ENCODE measurements at regions of chr11 and their contacts with region 1.

Region 1: GRCh38 chr11:17528181-17528691 is 16.0 kb downstream of the USH1C start:
- DNase-seq: peak; percentile 82
- ATAC-seq: peak; percentile 95
- H3K4me3 Mint-ChIP-seq: no peak overlapping the region
- H3K27ac Mint-ChIP-seq: no peak overlapping the region
- H3K4me1 Mint-ChIP-seq: peaks cover 5% of the 10 kb centered on the region; the same call in 1 of the 2 replicates
- H3K27me3 Mint-ChIP-seq: no peaks in the 10 kb centered on the region; the same call in 1 of the 2 replicates
- CTCF ChIP-seq: peak; percentile 73

Region 2: GRCh38 chr11:17229481-17230152 is 298.6 kb before region 1 on chr11:
- CTCF ChIA-PET with region 1: interaction called, 19 read pairs
- POLR2A ChIA-PET with region 1: no interaction called
- DNase-seq: no peak
- ATAC-seq: no peak
- H3K4me3 Mint-ChIP-seq: no peak overlapping the region
- H3K27ac Mint-ChIP-seq: no peak overlapping the region
- H3K4me1 Mint-ChIP-seq: no peaks in the 10 kb centered on the region
- H3K27me3 Mint-ChIP-seq: no peaks in the 10 kb centered on the region
- CTCF ChIP-seq: no peak

Region 3: GRCh38 chr11:17384002-17384511 is 144.2 kb before region 1 on chr11:
- CTCF ChIA-PET with region 1: interaction called, 203 read pairs
- POLR2A ChIA-PET with region 1: no interaction called
- DNase-seq: peak; percentile 84
- ATAC-seq: peak; percentile 71
- H3K4me3 Mint-ChIP-seq: no peak overlapping the region
- H3K27ac Mint-ChIP-seq: no peak overlapping the region
- H3K4me1 Mint-ChIP-seq: no peaks in the 10 kb centered on the region
- H3K27me3 Mint-ChIP-seq: peaks cover 7% of the 10 kb centered on the region
- CTCF ChIP-seq: peak; percentile 93

Region 4: GRCh38 chr11:17457396-17458173 is 70.7 kb before region 1 on chr11:
- CTCF ChIA-PET with region 1: interaction called, 16 read pairs
- POLR2A ChIA-PET with region 1: interaction called, 4 read pairs
- DNase-seq: no peak
- ATAC-seq: peak; percentile 77
- H3K4me3 Mint-ChIP-seq: no peak overlapping the region
- H3K27ac Mint-ChIP-seq: no peak overlapping the region
- H3K4me1 Mint-ChIP-seq: peaks cover 21% of the 10 kb centered on the region
- H3K27me3 Mint-ChIP-seq: no peaks in the 10 kb centered on the region; the same call in 1 of the 2 replicates
- CTCF ChIP-seq: no peak

Region 5: DNA sequence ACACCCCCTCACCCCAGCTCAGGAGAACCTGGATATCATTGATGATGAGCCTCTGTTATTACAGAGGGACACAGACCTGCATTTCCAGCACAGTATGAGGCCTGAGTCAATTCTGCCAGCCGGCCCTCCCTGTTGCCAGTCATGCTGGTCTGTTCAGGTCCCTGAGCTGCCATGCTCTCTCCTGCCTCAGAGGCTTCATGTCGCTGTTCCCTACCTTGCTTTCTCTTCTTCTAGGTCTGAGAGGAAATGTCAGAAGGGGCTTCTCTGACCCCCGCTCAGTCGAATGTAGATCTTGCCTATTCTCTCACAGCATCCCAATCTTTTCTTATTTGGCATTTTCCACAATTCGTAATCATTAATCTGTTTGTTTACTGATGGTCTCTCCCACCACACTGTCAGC is 29.8 kb before region 1 on chr11:
- CTCF ChIA-PET with region 1: interaction called, 120 read pairs
- POLR2A ChIA-PET with region 1: no interaction called
- DNase-seq: peak; percentile 47
- ATAC-seq: peak; percentile 89
- H3K4me3 Mint-ChIP-seq: no peak overlapping the region
- H3K27ac Mint-ChIP-seq: no peak overlapping the region
- H3K4me1 Mint-ChIP-seq: 0 out of 2 replicates have a peak, but pooled peaks cover 2% of the 10 kb centered on the region
- H3K27me3 Mint-ChIP-seq: peaks cover 2% of the 10 kb centered on the region; the same call in 1 of the 2 replicates
- CTCF ChIP-seq: no peak

Region 6: GRCh38 chr11:17544181-17544622 is 16.0 kb after region 1 on chr11 and contains the start of gene USH1C:
- CTCF ChIA-PET with region 1: interaction called, 104 read pairs
- POLR2A ChIA-PET with region 1: no interaction called
- DNase-seq: peak; percentile 79
- ATAC-seq: peak; percentile 57
- H3K4me3 Mint-ChIP-seq: peak within 1 kb of the TSS; percentile 72
- H3K27ac Mint-ChIP-seq: 0 out of 2 replicates have a peak within 1 kb of the TSS, but pooled peaks have one; percentile 30
- H3K4me1 Mint-ChIP-seq: peaks cover 49% of the 10 kb centered on the region
- H3K27me3 Mint-ChIP-seq: peaks cover 36% of the 10 kb centered on the region
- CTCF ChIP-seq: no peak
- total RNA-seq, gene USH1C: 3.3 to 3.9 TPM (median 3.7 TPM) in 3 replicates